Dorsolateral prefrontal cortex (tissue), 120 donors: ENCODE measurements at regions of chr12 and their contacts with region 1.

Region 1: GRCh38 chr12:41286426-41286825 is 98.3 kb downstream of the PDZRN4 start:
- DNase-seq: no peak
- H3K4me3 ChIP-seq: no peak overlapping the region
- H3K27ac ChIP-seq: peak overlapping the region in 1 of 59 donors; percentile 12
- H3K27me3 ChIP-seq: no peaks in the 10 kb centered on the region
- CTCF ChIP-seq: no peak

Region 2: DNA sequence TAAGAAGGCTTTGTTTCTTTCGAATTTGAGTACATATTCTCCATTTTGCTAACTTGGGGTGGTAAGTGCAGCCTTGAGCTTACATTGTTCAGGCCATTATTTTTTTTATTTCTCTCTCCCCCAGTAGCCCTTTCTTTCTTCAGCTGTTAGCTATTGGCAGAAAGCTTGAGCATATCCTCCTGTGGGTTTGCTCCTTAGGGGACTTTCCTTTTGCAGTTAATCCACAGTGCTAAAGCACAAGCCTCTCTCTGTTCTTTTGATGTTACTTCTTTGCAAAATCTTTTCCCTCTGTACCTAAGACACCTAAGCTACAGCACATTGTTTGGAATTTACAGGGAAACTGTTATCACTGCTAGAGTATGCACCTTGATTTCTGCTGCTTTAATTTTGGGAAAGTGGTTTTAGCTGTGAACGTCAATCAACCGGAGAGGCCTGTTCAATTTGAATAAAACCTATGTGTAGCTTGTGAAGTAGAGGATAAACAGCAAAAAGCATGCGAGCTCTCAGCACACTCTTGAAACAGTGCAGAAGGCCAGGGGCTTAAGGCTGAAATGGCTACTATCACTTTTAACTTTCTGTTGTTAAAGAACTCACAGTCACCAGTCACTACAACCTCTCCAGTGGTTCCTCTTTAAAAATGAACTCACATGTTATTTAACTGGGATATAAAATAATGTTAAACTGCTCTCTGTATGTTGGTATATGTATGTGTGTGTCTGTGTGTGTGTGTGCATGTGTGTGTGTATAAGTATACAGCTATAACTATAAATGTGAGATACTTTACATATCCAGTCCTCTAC is 40.9 kb after region 1 on chr12:
- intact Hi-C with region 1: no loop called
- DNase-seq: no peak
- H3K4me3 ChIP-seq: no peak overlapping the region
- H3K27ac ChIP-seq: no peak overlapping the region
- H3K27me3 ChIP-seq: no peaks in the 10 kb centered on the region
- CTCF ChIP-seq: no peak

Region 3: GRCh38 chr12:41437563-41437962 is 151.1 kb after region 1 on chr12:
- intact Hi-C with region 1: loop called in 1 of 2 experiments (anchors 10 kb)
- DNase-seq: peak in 4 of 10 donors; percentile 29 to 46 (median 41)
- H3K4me3 ChIP-seq: peak overlapping the region; percentile 16 to 69 (median 49)
- H3K27ac ChIP-seq: peak overlapping the region in 49 of 59 donors; percentile 1 to 82 (median 53)
- H3K27me3 ChIP-seq: no peaks in the 10 kb centered on the region
- CTCF ChIP-seq: no peak

Region 4: DNA sequence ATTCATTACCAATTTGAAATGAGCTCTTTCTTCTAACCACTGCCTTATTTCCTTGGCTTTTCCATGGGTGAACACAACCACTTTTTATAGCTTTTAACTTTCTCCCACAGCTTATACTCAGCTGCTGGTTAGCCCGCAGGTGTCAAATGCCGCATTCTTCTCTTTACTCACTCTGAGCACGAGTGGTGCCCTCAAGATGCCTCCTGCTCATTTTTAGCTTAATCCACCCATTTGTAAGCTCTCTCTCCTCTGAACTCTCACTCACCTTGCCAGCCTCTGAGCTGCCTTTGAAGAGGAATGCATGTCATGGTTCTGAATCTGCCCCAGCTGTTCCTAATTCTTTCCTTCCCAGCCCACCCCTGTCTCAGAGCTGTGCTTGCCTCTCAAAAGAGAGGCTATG is 1752.6 kb after region 1 on chr12:
- intact Hi-C with region 1: no loop called
- DNase-seq: no peak
- H3K4me3 ChIP-seq: no peak overlapping the region
- H3K27ac ChIP-seq: no peak overlapping the region
- H3K27me3 ChIP-seq: no peaks in the 10 kb centered on the region
- CTCF ChIP-seq: no peak